BJ (cell line): ENCODE measurements at regions of chr1 and their contacts with region 1.

Region 1: GRCh38 chr1:22506130-22506692 is 54.6 kb downstream of the ZBTB40 start:
- DNase-seq: no peak
- H3K4me3 ChIP-seq: no peak overlapping the region
- H3K27me3 ChIP-seq: no peaks in the 10 kb centered on the region
- CTCF ChIP-seq: no peak

Region 2: GRCh38 chr1:22018583-22019559 is 487.3 kb before region 1 on chr1:
- CTCF ChIA-PET with region 1: no interaction called
- POLR2A ChIA-PET with region 1: interaction called, 15 read pairs
- DNase-seq: no peak
- H3K4me3 ChIP-seq: no peak overlapping the region
- H3K27me3 ChIP-seq: no peaks in the 10 kb centered on the region
- CTCF ChIP-seq: peak; percentile 48

Region 3: DNA sequence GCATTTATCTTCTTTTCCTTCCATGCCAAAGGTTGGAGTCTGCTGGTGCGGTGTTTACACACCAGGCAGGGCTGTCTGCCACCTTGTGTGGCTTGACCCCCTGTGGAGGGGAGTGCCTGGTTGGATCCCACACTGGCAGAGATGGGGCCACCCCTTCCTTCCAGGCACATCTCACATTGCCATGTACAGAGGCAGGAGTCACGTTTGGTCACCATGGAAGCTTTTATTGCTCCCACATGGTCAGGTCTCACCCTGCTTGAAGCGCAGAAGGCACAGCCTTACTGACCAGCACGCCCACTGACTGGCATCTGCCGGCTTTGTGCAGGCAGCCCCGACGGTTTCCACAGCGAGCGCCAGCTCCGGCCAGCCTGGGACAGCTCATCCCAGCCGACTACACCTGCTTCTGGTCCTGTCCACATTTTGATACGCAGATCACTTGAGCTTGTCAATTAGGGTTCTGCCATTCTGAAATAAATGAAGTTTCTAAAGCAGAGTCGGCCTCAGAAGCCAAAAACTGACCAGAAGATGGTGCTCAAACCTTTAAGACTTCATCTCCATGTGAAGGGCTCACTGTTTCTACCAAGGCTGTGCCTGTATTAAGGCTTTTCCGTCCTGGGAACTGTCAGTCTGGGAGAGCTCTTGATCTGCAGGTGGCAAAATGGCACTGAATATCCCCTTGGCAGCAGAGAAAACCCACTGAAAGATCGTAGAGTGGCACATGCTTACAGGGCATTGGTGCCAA is 21.5 kb after region 1 on chr1:
- CTCF ChIA-PET with region 1: no interaction called
- POLR2A ChIA-PET with region 1: no interaction called
- DNase-seq: no peak
- H3K4me3 ChIP-seq: no peak overlapping the region
- H3K27me3 ChIP-seq: no peaks in the 10 kb centered on the region
- CTCF ChIP-seq: no peak